ENCODE measurements at regions of chr21 and their contacts with region 1.

Region 1: DNA sequence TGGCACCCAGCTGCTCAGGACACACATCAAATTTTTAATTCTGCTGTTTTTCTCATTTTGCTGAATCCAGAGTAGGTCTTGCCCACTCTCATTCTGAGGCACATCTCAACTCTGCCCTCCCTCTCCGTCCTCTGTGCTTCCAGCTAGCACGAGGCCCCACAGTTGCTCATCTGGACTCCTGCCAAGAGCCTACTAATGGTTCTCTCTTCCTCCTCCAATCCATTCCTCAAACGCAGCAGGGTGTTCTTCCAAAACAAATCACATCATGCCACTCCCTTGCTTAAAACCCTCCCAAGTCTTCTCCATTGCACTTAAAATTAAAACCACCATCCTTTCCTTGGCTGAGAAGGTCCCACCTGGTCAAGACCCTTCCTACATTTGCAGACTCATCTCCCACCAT is 49.8 kb upstream of the SCAF4 start:
- DNase-seq: no peak
- H3K4me3 ChIP-seq: no peak overlapping the region
- H3K4me3 Mint-ChIP-seq: no peak overlapping the region
- H3K27ac ChIP-seq: no peak overlapping the region
- H3K27ac Mint-ChIP-seq: no peak overlapping the region
- H3K4me1 ChIP-seq: no peaks in the 10 kb centered on the region
- H3K4me1 Mint-ChIP-seq: peaks cover 0 to 9% (median 5%) of the 10 kb centered on the region in 4 donors
- H3K27me3 ChIP-seq: no peaks in the 10 kb centered on the region
- H3K27me3 Mint-ChIP-seq: peaks cover 2 to 12% of the 10 kb centered on the region in 2 donors

Region 2: DNA sequence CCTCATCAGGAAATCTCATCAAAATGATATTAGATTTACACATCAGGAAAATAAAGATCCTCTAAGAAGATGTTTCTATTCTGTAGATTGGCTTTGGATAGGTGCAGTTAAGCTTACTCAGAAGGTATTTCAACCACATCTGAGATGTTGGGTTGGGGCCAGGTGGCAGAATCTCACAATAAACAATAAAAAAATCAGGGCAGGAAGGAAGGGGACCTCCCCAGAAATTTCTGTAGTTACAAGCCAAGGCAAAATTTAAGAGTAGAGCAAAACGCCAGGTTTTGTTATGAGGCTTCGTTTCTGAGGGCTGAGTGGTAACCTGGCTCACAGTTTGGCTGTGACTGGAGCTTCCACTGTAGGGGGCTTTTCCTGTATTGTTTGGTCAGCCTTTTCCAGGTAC is 175.9 kb after region 1 on chr21:
- CTCF ChIA-PET with region 1: no interaction called
- POLR2A ChIA-PET with region 1: no interaction called
- intact Hi-C with region 1: no loop called
- DNase-seq: peak in 3 of 5 donors; percentile 1 to 32 (median 26)
- H3K4me3 ChIP-seq: no peak overlapping the region
- H3K4me3 Mint-ChIP-seq: peak overlapping the region in 2 of 8 donors; percentile 1 to 2
- H3K27ac ChIP-seq: no peak overlapping the region
- H3K27ac Mint-ChIP-seq: peak overlapping the region in 3 of 7 donors; percentile 59 to 72 (median 63)
- H3K4me1 ChIP-seq: peaks cover 26% of the 10 kb centered on the region
- H3K4me1 Mint-ChIP-seq: peaks cover 0 to 11% (median 6%) of the 10 kb centered on the region in 4 donors
- H3K27me3 ChIP-seq: no peaks in the 10 kb centered on the region
- H3K27me3 Mint-ChIP-seq: peaks cover 0 to 2% of the 10 kb centered on the region in 2 donors

Region 3: DNA sequence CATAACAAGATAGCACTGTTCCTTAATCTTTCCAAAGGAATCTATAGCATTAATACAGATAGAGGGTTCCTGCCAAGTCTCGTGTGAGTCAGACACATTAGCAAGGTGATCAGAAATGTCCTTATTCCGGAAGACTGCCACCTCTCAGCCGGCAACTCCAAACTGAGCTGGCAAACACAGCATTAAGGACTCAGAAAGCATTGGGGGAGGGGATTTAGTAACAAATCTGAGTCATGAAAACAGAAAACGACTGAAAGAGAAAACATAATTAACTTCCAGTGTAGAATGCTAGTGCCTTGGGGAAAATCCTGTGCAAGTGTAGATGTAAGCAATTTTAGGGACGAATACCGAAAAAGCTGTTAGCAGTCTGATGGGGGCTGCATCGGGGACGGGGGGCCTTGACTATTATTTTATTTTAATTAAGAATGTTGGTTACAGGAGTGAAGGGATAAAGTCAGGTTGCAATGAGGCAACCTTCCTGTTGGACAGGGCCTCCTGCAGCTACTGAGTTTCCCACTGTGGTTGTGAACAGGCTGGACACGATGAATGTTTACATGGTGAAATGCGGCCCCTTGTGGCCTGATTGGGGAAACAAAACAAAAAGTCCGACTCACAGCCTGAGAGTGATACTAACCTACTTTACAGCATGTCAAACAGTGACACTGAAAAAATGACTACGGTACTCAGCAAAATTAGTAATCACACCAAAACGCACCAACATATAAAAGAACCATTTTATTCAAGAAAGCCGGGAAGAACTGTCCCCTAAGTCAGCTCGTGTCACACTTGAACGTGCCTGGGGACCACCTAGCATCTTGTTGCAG is 476.4 kb after region 1 on chr21:
- CTCF ChIA-PET with region 1: interaction called, 3 read pairs
- POLR2A ChIA-PET with region 1: no interaction called
- intact Hi-C with region 1: loop called (anchors 10 kb)
- DNase-seq: peak in 3 of 5 donors; percentile 14 to 19 (median 16)
- H3K4me3 ChIP-seq: no peak overlapping the region
- H3K4me3 Mint-ChIP-seq: no peak overlapping the region
- H3K27ac ChIP-seq: no peak overlapping the region
- H3K27ac Mint-ChIP-seq: peak overlapping the region in 2 of 7 donors; percentile 32 to 80
- H3K4me1 ChIP-seq: no peaks in the 10 kb centered on the region
- H3K4me1 Mint-ChIP-seq: no peaks in the 10 kb centered on the region
- H3K27me3 ChIP-seq: peaks cover 4% of the 10 kb centered on the region
- H3K27me3 Mint-ChIP-seq: peaks cover 8 to 14% of the 10 kb centered on the region in 2 donors

Measured in CD4-positive, alpha-beta memory T cell (primary cell).